ENCODE measurements at regions of chr1 and their contacts with region 1.

Region 1: GRCh38 chr1:110460253-110461220 is 9.6 kb downstream of the PROK1 start:
- DNase-seq: peak; percentile 88
- ATAC-seq: peak; percentile 88
- H3K4me3 Mint-ChIP-seq: no peak overlapping the region
- H3K27ac Mint-ChIP-seq: no peak overlapping the region
- H3K4me1 Mint-ChIP-seq: no peaks in the 10 kb centered on the region
- H3K27me3 Mint-ChIP-seq: no peaks in the 10 kb centered on the region

Region 2: GRCh38 chr1:110203021-110203661 is 257.4 kb before region 1 on chr1:
- CTCF ChIA-PET with region 1: interaction called, 92 read pairs
- POLR2A ChIA-PET with region 1: no interaction called
- DNase-seq: peak; percentile 85
- ATAC-seq: peak; percentile 66
- H3K4me3 Mint-ChIP-seq: no peak overlapping the region
- H3K27ac Mint-ChIP-seq: peak overlapping the region; percentile 90
- H3K4me1 Mint-ChIP-seq: peaks cover 24% of the 10 kb centered on the region
- H3K27me3 Mint-ChIP-seq: no peaks in the 10 kb centered on the region

Region 3: GRCh38 chr1:110338886-110339406 is 121.6 kb before region 1 on chr1 and contains the start of gene RBM15:
- CTCF ChIA-PET with region 1: interaction called, 28 read pairs
- POLR2A ChIA-PET with region 1: interaction called, 3 read pairs
- DNase-seq: peak; percentile 99
- ATAC-seq: peak; percentile 82
- H3K4me3 Mint-ChIP-seq: no peak within 1 kb of the TSS
- H3K27ac Mint-ChIP-seq: no peak within 1 kb of the TSS
- H3K4me1 Mint-ChIP-seq: peaks cover 52% of the 10 kb centered on the region
- H3K27me3 Mint-ChIP-seq: no peaks in the 10 kb centered on the region
- total RNA-seq, gene RBM15: 72.0 to 75.5 TPM

Region 4: DNA sequence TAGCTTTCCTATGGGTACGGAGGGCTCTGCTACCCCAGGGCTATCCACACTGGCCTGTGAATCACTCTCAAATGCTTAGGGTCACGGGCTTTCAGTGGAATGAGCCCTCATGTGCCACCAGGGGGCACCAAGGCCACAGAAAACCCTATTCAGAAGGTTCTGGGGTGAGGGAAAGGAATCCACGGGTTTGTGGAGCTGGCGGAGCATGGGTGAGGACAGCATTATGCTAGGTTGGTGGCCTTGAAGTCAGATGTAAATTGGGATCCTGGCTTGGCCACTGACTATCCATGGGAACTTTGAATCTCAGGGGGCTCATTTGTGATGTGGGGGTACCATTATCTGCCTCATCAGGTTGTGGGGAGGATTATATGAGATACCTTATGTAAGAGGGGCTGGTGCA is 48.0 kb before region 1 on chr1:
- CTCF ChIA-PET with region 1: interaction called, 68 read pairs
- POLR2A ChIA-PET with region 1: no interaction called
- DNase-seq: peak; percentile 70
- ATAC-seq: peak; percentile 55
- H3K4me3 Mint-ChIP-seq: no peak overlapping the region
- H3K27ac Mint-ChIP-seq: no peak overlapping the region
- H3K4me1 Mint-ChIP-seq: peaks cover 16% of the 10 kb centered on the region
- H3K27me3 Mint-ChIP-seq: no peaks in the 10 kb centered on the region

Region 5: DNA sequence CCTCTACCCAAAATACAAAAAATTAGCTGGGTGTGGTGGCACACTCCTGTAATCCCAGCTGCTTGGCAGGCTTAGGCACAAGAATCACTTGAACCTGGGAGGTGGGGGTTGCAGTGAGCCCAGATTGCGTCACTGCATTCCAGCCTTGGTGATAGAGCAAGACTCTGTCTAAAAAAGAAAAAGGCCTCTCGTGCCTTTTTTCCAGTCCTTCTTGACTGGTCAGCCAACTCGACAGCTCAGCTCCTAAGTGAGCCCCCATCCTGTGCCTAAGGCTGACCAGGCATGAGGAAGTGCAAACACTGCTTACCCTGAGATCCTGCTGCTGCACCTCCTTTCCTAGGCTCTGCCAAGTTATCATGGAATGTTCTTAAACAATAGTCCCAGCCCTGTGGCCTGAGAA is 19.7 kb before region 1 on chr1:
- CTCF ChIA-PET with region 1: interaction called, 22 read pairs
- POLR2A ChIA-PET with region 1: no interaction called
- DNase-seq: no peak
- ATAC-seq: no peak
- H3K4me3 Mint-ChIP-seq: no peak overlapping the region
- H3K27ac Mint-ChIP-seq: no peak overlapping the region
- H3K4me1 Mint-ChIP-seq: no peaks in the 10 kb centered on the region
- H3K27me3 Mint-ChIP-seq: peaks cover 6% of the 10 kb centered on the region

Region 6: GRCh38 chr1:111006541-111006940 is 546.0 kb after region 1 on chr1:
- CTCF ChIA-PET with region 1: no interaction called
- POLR2A ChIA-PET with region 1: no interaction called
- DNase-seq: no peak
- ATAC-seq: no peak
- H3K4me3 Mint-ChIP-seq: no peak overlapping the region
- H3K27ac Mint-ChIP-seq: no peak overlapping the region
- H3K4me1 Mint-ChIP-seq: no peaks in the 10 kb centered on the region
- H3K27me3 Mint-ChIP-seq: peaks cover 15% of the 10 kb centered on the region

Region 7: DNA sequence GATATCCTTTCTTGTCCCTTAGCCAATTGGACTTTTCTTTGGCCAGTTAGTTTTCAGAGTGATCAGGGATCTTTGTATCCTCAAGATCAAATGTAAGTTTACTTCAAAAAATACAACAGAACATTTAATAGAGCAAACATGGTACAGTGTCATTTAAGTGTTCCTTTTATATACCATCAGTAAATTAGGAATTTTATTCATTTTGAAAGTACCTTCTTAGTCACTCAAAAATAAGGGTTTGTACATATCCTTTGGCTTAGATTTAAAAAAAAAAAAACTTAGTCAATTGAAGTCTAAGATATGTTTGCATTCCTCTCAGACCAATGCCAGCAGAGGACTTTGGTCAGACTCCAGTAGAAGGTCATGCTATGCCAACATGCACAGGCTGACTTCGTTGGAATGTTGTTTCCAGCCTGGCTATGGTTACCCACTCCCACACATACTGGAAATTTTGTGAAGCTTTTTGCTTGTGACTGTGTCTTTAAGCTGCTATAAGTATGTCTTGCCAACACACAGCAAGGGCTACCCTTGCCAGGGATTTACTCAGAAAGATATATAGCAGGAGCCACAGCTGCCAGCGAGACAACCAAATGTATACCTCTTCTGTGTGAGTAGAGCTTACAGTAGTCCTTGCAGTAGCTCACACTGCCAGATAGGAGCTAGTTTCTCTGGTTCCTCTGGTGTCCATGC is 584.6 kb after region 1 on chr1:
- CTCF ChIA-PET with region 1: no interaction called
- POLR2A ChIA-PET with region 1: no interaction called
- DNase-seq: no peak
- ATAC-seq: no peak
- H3K4me3 Mint-ChIP-seq: no peak overlapping the region
- H3K27ac Mint-ChIP-seq: no peak overlapping the region
- H3K4me1 Mint-ChIP-seq: no peaks in the 10 kb centered on the region
- H3K27me3 Mint-ChIP-seq: peaks cover 30% of the 10 kb centered on the region